CD14-positive monocyte (primary cell): ENCODE measurements at regions of chr13 and their contacts with region 1.

Region 1: DNA sequence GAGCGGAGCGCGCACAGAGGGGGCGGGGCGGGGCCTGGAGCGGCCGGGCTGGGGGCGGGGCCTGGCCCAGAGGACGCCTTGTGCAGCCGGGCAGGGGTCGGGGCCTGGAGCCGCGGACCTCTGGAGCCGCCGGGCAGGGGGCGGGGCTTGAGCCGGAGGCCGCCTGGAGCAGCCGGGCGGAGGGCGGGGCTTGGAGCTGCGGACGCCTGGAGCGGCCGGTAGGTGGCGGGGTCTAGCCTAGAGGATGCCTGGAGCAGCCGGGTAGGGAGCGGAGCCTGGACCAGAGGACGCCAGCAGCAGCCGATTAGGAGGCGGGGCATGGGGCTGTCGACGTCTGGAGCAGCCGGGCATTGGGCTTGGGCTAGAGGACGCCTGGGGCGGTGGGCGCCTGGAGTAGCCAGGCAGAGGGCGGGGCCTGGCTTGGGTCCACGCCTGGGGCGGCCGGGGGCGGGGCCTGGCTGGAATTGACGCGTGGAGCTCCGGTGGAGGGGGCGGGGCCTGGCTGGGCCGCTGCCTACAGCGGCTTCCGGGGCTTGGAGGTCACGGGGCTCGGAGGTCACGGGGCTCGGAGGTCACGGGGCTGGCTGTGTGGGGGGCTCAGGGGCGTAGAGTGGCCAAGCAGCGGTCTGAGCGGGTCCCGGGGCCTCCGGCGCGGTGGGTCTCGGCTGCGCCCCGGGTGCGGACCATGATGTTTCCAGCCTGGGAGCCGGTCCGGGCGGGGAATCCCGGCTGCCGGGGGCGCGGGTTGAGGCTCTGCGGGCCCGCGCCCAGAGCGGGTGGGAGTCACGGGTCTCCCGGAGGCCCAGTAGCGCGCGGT is at the start of gene ANKRD10:
- DNase-seq: peak; percentile 98 to 99 (median 98)
- H3K4me3 ChIP-seq: peak within 1 kb of the TSS; percentile 86 to 96 (median 89)
- H3K4me3 Mint-ChIP-seq: peak within 1 kb of the TSS; percentile 90 to 92
- H3K27ac ChIP-seq: peak within 1 kb of the TSS; percentile 98 to 100
- H3K27ac Mint-ChIP-seq: peak within 1 kb of the TSS; percentile 96 to 100 (median 99)
- H3K4me1 ChIP-seq: peaks cover 27 to 28% of the 10 kb centered on the region in 2 donors
- H3K4me1 Mint-ChIP-seq: peaks cover 31% of the 10 kb centered on the region
- H3K27me3 ChIP-seq: no peaks in the 10 kb centered on the region
- H3K27me3 Mint-ChIP-seq: peaks cover 2 to 7% (median 3%) of the 10 kb centered on the region in 3 donors
- CTCF ChIP-seq: peak; percentile 82
- polyA plus RNA-seq, gene ANKRD10: 30.5 to 79.9 (median 37.2) TPM

Region 2: GRCh38 chr13:110665491-110666254 is 249.6 kb before region 1 on chr13:
- intact Hi-C with region 1: loop called in 1 of 2 experiments (anchors 10 kb)
- DNase-seq: peak; percentile 83 to 89 (median 85)
- H3K4me3 ChIP-seq: peak overlapping the region; percentile 19 to 66 (median 26)
- H3K4me3 Mint-ChIP-seq: peak overlapping the region; percentile 76 to 90
- H3K27ac ChIP-seq: peak overlapping the region; percentile 91 to 98
- H3K27ac Mint-ChIP-seq: peak overlapping the region; percentile 97 to 99 (median 98)
- H3K4me1 ChIP-seq: peaks cover 70 to 72% of the 10 kb centered on the region in 2 donors
- H3K4me1 Mint-ChIP-seq: peaks cover 69% of the 10 kb centered on the region
- H3K27me3 ChIP-seq: no peaks in the 10 kb centered on the region
- H3K27me3 Mint-ChIP-seq: peaks cover 0 to 4% (median 0%) of the 10 kb centered on the region in 3 donors
- CTCF ChIP-seq: no peak

Region 3: DNA sequence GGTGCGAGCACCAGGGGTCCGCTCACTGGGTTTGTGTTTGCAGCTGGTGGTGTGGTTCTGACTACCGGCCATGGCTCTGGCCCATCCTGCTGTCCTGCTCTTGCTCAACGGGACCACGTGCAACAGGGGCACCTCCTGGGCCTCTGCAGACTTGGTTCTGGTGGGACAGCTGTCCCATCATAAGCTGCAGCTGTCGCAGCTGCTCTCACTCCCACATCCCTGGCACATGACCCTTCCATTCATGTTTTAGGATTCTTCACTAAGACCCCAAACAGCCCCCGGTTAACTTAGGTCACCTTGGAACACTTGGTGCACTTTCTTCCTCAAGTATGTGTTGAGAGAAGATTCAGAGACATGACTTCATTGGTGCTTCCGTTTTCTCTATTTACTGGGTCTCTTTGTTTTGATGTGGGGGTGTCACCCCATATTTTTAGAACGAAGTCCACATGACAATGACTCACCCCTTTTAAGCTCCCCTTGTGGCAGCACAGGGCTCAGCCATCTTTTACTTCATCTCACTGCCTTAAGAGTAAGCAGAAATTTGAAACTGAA is 131.4 kb after region 1 on chr13:
- intact Hi-C with region 1: loop called in 1 of 2 experiments (anchors 10 kb)
- DNase-seq: peak; percentile 7 to 66 (median 35)
- H3K4me3 ChIP-seq: no peak overlapping the region
- H3K4me3 Mint-ChIP-seq: no peak overlapping the region
- H3K27ac ChIP-seq: no peak overlapping the region
- H3K27ac Mint-ChIP-seq: peak overlapping the region in 6 of 7 donors; percentile 4 to 74 (median 40)
- H3K4me1 ChIP-seq: no peaks in the 10 kb centered on the region
- H3K4me1 Mint-ChIP-seq: peaks cover 11% of the 10 kb centered on the region
- H3K27me3 ChIP-seq: no peaks in the 10 kb centered on the region
- H3K27me3 Mint-ChIP-seq: peaks cover 2 to 9% (median 3%) of the 10 kb centered on the region in 3 donors
- CTCF ChIP-seq: peak; percentile 23

Region 4: DNA sequence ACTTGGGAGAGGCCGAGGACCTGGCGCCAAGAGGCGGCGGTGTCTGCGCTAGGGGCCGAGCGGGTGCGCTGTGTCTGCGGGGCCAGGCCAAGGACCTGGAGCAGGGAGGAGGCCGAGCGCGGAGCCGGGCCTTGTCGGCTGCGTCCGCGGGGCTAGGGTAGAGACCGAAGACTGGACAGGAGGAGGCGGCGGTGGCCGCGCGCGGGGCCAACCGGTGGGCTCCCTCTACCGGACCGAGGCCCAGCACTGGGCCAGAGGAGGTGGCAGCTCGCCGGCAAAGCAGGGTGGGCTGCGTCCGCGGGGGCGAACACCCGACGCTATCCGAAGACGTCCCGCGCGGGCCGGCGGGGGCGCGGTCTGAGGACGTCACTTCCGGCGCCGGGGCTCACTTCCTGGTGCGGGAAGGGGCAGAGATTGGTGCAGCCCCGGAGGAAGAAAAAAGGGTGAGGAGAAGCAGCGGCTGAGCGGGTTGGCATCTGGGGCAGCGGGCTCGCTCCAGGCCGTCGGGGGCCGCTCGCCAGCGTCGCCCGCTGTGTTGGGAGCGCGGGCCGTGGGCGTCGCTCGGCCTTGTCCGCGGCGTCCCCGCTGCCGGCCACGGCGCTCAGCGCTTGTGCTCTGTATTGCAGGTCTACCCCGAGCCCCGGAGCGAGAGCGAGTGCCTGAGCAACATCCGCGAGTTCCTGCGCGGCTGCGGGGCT is 238.2 kb after region 1 on chr13:
- intact Hi-C with region 1: loop called (anchors 5 kb)
- DNase-seq: peak; percentile 83 to 91 (median 89)
- H3K4me3 ChIP-seq: peak overlapping the region; percentile 63 to 92 (median 77)
- H3K4me3 Mint-ChIP-seq: peak overlapping the region; percentile 87 to 88
- H3K27ac ChIP-seq: peak overlapping the region; percentile 82 to 92
- H3K27ac Mint-ChIP-seq: peak overlapping the region; percentile 90 to 96 (median 93)
- H3K4me1 ChIP-seq: peaks cover 16 to 23% of the 10 kb centered on the region in 2 donors
- H3K4me1 Mint-ChIP-seq: peaks cover 24% of the 10 kb centered on the region
- H3K27me3 ChIP-seq: peaks cover 9 to 22% of the 10 kb centered on the region in 2 donors
- H3K27me3 Mint-ChIP-seq: peaks cover 12 to 24% (median 14%) of the 10 kb centered on the region in 3 donors
- CTCF ChIP-seq: peak; percentile 33

Region 5: DNA sequence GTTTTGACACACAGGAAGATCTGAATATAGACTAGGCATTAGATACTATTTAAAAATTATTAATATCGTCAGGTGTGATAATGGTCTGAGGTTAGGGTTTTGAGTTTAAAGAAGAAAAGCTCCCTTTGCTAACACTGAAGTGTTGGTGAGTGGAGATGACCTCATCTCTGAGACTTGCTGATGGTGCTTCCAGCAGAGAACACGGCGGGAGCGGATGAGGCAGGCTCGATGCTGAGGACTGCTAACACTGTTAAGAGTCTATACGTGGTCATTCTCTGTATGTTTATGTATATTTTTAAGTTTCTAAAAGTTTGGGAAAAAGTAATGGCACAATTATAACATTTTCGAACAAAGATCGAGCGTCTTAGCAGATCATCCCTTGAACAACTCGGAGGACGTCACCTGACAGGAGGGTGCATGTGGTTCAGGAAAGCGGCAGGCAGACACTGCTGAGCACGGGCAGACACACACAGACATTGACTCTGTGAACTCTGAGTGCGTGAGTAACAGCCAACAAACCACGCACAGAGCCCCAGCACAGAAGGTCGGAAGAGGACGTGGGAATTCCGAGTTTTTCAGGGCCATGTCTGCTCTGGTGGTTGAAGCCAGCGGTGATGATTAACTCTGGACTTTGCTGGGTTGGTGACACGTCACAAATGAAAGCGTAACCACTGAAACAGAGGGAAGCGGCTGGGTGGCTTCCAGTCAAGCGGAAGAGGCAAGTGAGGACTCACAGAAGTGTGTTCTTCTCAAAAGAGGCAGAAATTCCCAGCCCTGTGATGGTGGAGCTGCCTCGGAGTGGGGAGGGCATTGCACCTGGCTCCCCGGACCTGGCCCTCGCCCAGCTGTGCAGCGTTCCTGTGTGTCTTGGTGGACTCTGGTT is 313.2 kb after region 1 on chr13:
- intact Hi-C with region 1: loop called in 1 of 2 experiments (anchors 10 kb)
- DNase-seq: no peak
- H3K4me3 ChIP-seq: no peak overlapping the region
- H3K4me3 Mint-ChIP-seq: no peak overlapping the region
- H3K27ac ChIP-seq: no peak overlapping the region
- H3K27ac Mint-ChIP-seq: peak overlapping the region in 1 of 7 donors; percentile 32
- H3K4me1 ChIP-seq: no peaks in the 10 kb centered on the region
- H3K4me1 Mint-ChIP-seq: no peaks in the 10 kb centered on the region
- H3K27me3 ChIP-seq: no peaks in the 10 kb centered on the region
- H3K27me3 Mint-ChIP-seq: no peaks in the 10 kb centered on the region
- CTCF ChIP-seq: no peak